ENCODE measurements at regions of chr2 and their contacts with region 1.

Region 1: DNA sequence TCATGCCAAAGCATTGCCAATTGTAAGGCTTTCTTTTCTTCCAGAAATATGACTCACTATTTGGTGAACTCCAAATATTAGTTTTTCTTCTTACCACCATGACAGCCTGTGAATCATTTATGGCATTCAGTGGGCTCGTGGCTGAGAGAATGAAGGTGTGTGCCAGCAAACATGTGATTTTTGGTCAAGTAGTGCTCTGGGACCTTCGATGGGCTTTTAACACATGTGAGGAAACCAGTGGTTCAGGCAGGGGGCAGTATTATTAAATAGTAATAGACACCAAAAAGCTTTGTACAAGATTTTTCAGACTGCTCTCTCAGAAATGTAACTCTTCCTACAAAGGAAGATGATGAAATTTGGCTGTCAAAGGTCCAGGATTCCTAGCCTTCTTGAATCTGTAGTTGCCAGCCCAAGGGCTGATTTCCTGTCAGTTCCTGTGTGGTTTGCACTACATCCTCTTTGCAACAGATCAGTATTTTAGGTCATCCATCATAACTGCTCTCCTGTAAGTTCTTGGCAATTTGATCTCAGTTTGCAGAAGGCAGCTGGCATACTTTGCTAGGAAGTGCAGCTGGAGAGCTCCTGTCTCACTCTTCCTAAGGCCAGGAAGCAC is 64.3 kb downstream of the BABAM2 start:
- DNase-seq: peak; percentile 66
- ATAC-seq: peak; percentile 91

Region 2: GRCh38 chr2:28392297-28393113 is 437.6 kb after region 1 on chr2 and contains the start of gene FOSL2:
- intact Hi-C with region 1: loop called (anchors 10 kb)
- DNase-seq: peak; percentile 96
- ATAC-seq: peak; percentile 72
- total RNA-seq, gene FOSL2: 230 TPM